ENCODE measurements at regions of chr20 and their contacts with region 1.

Region 1: DNA sequence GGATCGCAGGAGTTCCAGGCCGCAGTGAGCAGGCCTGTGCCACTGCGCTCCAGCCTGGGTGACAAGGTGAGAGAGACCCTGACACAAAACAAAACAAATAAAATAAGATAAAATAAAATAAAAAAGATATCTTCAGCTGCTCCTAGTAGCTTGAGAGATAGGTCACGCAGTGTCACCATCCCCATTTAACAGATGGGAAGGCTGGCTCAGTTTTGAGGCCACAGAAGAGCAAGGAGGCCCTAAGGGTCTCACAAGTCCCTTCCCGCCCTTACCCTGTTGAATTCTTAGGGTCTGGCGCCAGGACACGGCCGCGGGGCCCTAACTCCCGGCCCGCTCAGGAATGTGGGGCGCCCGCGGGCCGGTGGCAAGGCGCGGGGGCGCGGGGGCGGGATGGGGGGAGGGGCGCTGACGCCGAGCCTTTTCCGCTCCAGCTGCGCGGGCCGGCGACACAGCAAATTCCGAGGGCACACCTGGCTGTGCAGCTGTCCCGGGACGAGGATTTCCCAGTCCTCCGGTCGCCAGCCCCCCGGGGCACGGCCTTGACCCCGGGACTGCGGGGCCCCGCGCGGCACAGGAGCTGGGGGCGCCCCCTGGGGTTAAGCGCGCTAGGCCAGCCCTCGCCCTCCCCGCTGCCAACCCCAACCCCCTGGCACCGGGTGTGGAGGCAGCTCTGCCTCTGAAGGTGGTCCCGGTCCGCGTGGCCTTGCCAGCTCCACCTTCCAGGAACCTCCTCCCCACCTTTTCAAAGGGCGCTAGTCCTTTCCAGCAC is 10.3 kb upstream of the R3HDML start:
- DNase-seq: no peak
- H3K4me3 ChIP-seq: peak overlapping the region; percentile 24
- H3K27ac ChIP-seq: no peak overlapping the region
- H3K4me1 ChIP-seq: no peaks in the 10 kb centered on the region
- H3K27me3 ChIP-seq: no peaks in the 10 kb centered on the region
- CTCF ChIP-seq: no peak

Region 2: DNA sequence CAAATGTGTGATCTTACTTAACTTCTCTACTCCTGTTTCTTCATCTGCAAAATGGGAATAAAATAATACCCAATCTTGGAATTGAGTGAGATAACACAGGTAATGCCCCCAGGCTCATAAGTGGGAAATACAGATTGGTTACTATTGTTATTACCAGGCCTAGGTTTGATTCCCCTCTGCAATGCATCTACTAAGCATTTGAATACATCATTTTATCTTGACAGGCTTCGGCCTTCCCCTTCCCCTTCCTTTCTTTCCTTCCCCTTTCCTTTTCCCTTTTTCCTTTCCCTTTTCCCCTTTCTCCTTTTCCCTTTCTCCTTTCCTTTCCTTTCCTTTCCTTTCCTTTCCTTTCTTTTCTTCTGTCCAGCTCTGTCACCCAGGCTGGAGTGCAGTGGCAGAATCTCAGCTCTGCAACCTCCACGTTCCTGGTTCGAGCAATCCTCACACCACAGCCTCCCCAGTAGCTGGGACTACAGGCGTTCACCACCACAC is 21.6 kb after region 1 on chr20:
- CTCF ChIA-PET with region 1: no interaction called
- POLR2A ChIA-PET with region 1: interaction called, 15 read pairs
- intact Hi-C with region 1: no loop called
- DNase-seq: no peak
- H3K4me3 ChIP-seq: no peak overlapping the region
- H3K27ac ChIP-seq: no peak overlapping the region
- H3K4me1 ChIP-seq: no peaks in the 10 kb centered on the region
- H3K27me3 ChIP-seq: no peaks in the 10 kb centered on the region
- CTCF ChIP-seq: no peak

Region 3: DNA sequence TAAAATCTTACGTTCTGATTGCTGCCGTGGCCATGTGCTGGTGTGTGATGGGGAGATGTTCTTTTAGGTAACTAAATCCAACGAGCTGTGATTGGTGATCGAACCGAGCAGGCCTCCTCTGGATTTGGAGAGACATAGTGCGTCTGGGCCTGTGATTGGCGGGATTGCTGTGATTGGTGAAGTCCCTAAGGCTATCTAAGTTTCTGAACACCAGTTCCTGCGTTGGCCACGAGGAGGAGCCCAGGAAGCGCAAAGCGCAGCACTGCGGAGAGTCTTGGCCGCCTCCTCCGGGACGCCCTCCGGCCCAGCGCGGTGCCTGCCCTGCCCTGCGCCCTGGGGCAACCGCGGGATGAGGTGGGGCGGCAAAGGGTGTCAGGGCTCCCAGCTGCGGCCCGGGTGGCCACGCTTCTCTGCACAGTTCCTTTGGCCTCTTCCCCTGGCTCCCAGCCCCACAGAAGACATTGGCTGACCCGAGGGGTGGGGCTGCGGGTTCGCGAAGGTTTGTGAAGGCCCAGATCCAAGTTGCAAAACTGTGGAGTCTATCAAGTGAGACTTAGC is 62.0 kb after region 1 on chr20:
- CTCF ChIA-PET with region 1: no interaction called
- POLR2A ChIA-PET with region 1: no interaction called
- intact Hi-C with region 1: no loop called
- DNase-seq: peak; percentile 89
- H3K4me3 ChIP-seq: no peak overlapping the region
- H3K27ac ChIP-seq: no peak overlapping the region
- H3K4me1 ChIP-seq: no peaks in the 10 kb centered on the region
- H3K27me3 ChIP-seq: no peaks in the 10 kb centered on the region
- CTCF ChIP-seq: peak; percentile 84

Measured in A673 (cell line).